ENCODE measurements at regions of chr9 and their contacts with region 1.

Region 1: DNA sequence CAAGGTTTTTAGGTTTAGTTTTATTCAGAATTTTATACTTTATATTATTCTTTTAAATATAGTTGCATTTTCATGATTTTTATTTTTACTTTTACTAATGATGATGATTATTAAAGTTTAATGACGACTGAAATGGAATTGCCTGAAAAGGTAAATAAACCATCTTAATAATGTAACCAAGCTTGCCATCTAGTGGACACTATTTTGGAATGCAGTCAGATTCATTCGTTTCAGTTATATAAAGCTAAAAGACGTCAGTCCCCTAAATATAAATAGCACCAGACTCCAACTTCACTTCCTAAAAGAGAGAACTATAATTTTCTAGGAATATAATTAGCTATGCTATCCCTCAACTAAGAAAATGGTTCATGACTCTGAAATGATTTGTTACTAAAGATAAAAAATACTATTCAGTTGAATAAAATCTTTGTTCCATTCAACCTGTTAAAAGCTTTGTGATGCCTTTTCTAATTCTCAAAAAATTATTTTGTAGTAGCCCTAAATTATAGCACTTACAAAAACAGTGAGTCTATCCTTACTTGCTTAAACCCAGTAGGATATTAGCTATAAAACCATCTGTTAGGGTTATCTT is 19.9 kb downstream of the ABITRAM start:
- DNase-seq: no peak
- H3K4me3 ChIP-seq: peak overlapping the region in 1 of 2 donors; percentile 11
- H3K27ac ChIP-seq: peak overlapping the region; percentile 78 to 79
- H3K4me1 ChIP-seq: no peaks in the 10 kb centered on the region
- H3K27me3 ChIP-seq: no peaks in the 10 kb centered on the region
- CTCF ChIP-seq: peak; percentile 60 to 68 (median 64)

Region 2: GRCh38 chr9:108972626-108973209 is 18.6 kb after region 1 on chr9:
- intact Hi-C with region 1: loop called (anchors 1 kb)
- DNase-seq: no peak
- H3K4me3 ChIP-seq: no peak overlapping the region
- H3K27ac ChIP-seq: peak overlapping the region; percentile 42 to 65
- H3K4me1 ChIP-seq: peaks cover 0 to 24% of the 10 kb centered on the region in 2 donors
- H3K27me3 ChIP-seq: no peaks in the 10 kb centered on the region
- CTCF ChIP-seq: no peak

Region 3: GRCh38 chr9:109063760-109064159 is 109.7 kb after region 1 on chr9:
- intact Hi-C with region 1: no loop called
- DNase-seq: no peak
- H3K4me3 ChIP-seq: no peak overlapping the region
- H3K27ac ChIP-seq: no peak overlapping the region
- H3K4me1 ChIP-seq: no peaks in the 10 kb centered on the region
- H3K27me3 ChIP-seq: no peaks in the 10 kb centered on the region
- CTCF ChIP-seq: no peak